MCF 10A (cell line): ENCODE measurements at regions of chr18 and their contacts with region 1.

Region 1: DNA sequence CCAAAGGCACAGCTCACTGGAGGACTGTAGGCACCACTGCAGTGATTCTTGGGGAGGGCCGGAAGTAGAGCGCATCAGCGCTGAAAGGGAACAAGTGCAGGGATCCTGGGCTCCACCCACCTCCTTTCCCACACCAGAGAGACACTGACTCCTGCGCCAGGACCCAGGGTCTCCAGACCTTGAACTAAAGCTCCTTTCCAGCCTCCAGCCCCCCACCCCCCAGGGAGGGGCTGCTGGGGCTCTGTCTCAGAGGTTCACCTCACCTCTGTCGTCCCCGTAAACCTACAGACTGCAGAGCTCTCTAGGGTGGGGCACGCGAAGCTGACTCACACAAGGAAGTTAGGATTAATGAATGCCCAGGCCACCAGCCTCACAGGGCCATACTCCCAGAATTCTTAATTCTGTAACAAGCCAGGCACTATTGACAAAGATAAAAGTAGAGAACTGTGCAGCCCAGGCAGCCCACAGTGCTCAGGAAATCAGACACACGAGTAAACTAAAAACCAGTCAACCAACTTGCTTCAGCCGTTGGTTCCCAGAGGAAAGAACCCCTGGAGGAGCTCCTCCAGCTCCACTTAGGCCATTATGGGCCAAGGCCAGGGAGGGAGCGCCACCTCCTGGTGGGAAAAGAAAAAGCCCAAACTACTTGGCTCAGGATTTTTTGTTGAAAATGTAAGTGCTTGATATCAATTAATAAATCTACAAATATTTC is 45.1 kb upstream of the ACAA2 start:
- DNase-seq: peak; percentile 72
- H3K4me3 Mint-ChIP-seq: no peak overlapping the region
- H3K27ac Mint-ChIP-seq: no peak overlapping the region
- H3K4me1 Mint-ChIP-seq: peaks cover 6% of the 10 kb centered on the region
- H3K27me3 Mint-ChIP-seq: no peaks in the 10 kb centered on the region
- CTCF ChIP-seq: peak; percentile 92

Region 2: GRCh38 chr18:49723648-49724180 is 134.8 kb before region 1 on chr18:
- CTCF ChIA-PET with region 1: no interaction called
- POLR2A ChIA-PET with region 1: no interaction called
- intact Hi-C with region 1: no loop called
- DNase-seq: no peak
- H3K4me3 Mint-ChIP-seq: no peak overlapping the region
- H3K27ac Mint-ChIP-seq: no peak overlapping the region
- H3K4me1 Mint-ChIP-seq: no peaks in the 10 kb centered on the region
- H3K27me3 Mint-ChIP-seq: no peaks in the 10 kb centered on the region
- CTCF ChIP-seq: no peak

Region 3: DNA sequence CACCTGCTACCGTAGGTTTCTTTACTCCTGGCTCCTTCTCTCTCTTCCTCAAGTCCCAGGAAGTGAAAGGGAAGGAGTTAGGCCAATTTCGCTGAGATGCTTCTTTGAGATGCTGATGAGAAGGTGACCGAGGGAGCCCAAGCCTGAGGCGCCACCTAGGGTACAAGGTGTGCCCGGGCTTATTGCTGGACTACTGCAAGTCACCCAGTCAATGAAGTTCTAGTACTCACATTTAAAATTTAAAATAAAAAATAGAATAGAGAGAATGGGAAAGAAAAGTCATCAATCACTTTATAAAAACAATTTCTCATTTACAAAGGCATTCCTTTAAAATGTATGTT is 90.4 kb before region 1 on chr18:
- CTCF ChIA-PET with region 1: interaction called, 37 read pairs
- POLR2A ChIA-PET with region 1: no interaction called
- intact Hi-C with region 1: loop called (anchors 5 kb)
- DNase-seq: peak; percentile 62
- H3K4me3 Mint-ChIP-seq: no peak overlapping the region
- H3K27ac Mint-ChIP-seq: no peak overlapping the region
- H3K4me1 Mint-ChIP-seq: no peaks in the 10 kb centered on the region
- H3K27me3 Mint-ChIP-seq: no peaks in the 10 kb centered on the region
- CTCF ChIP-seq: peak; percentile 82

Region 4: GRCh38 chr18:49813319-49814146 is 44.9 kb before region 1 on chr18 and contains the start of gene ACAA2:
- CTCF ChIA-PET with region 1: interaction called, 33 read pairs
- POLR2A ChIA-PET with region 1: interaction called, 14 read pairs
- intact Hi-C with region 1: loop called (anchors 1 kb)
- DNase-seq: peak; percentile 95
- H3K4me3 Mint-ChIP-seq: peak within 1 kb of the TSS; percentile 94
- H3K27ac Mint-ChIP-seq: peak within 1 kb of the TSS; percentile 97
- H3K4me1 Mint-ChIP-seq: peaks cover 28% of the 10 kb centered on the region
- H3K27me3 Mint-ChIP-seq: no peaks in the 10 kb centered on the region
- CTCF ChIP-seq: no peak
- total RNA-seq, gene ACAA2: 82.9 and 84.9 TPM in 2 replicates

Region 5: GRCh38 chr18:49874238-49874637 is 15.8 kb after region 1 on chr18:
- CTCF ChIA-PET with region 1: interaction called, 18 read pairs
- POLR2A ChIA-PET with region 1: interaction called, 3 read pairs
- intact Hi-C with region 1: no loop called
- DNase-seq: no peak
- H3K4me3 Mint-ChIP-seq: no peak overlapping the region
- H3K27ac Mint-ChIP-seq: no peak overlapping the region
- H3K4me1 Mint-ChIP-seq: no peaks in the 10 kb centered on the region
- H3K27me3 Mint-ChIP-seq: no peaks in the 10 kb centered on the region
- CTCF ChIP-seq: no peak

Region 6: GRCh38 chr18:51009072-51009471 is 1150.6 kb after region 1 on chr18:
- CTCF ChIA-PET with region 1: no interaction called
- POLR2A ChIA-PET with region 1: no interaction called
- intact Hi-C with region 1: no loop called
- DNase-seq: peak; percentile 6
- H3K4me3 Mint-ChIP-seq: no peak overlapping the region
- H3K27ac Mint-ChIP-seq: no peak overlapping the region
- H3K4me1 Mint-ChIP-seq: peaks cover 13% of the 10 kb centered on the region
- H3K27me3 Mint-ChIP-seq: no peaks in the 10 kb centered on the region
- CTCF ChIP-seq: no peak